Activated naive CD4-positive, alpha-beta T cell treated with anti-CD3 and anti-CD28 coated beads for 36 hours (primary cell): ENCODE measurements at regions of chr20 and their contacts with region 1.

Region 1: DNA sequence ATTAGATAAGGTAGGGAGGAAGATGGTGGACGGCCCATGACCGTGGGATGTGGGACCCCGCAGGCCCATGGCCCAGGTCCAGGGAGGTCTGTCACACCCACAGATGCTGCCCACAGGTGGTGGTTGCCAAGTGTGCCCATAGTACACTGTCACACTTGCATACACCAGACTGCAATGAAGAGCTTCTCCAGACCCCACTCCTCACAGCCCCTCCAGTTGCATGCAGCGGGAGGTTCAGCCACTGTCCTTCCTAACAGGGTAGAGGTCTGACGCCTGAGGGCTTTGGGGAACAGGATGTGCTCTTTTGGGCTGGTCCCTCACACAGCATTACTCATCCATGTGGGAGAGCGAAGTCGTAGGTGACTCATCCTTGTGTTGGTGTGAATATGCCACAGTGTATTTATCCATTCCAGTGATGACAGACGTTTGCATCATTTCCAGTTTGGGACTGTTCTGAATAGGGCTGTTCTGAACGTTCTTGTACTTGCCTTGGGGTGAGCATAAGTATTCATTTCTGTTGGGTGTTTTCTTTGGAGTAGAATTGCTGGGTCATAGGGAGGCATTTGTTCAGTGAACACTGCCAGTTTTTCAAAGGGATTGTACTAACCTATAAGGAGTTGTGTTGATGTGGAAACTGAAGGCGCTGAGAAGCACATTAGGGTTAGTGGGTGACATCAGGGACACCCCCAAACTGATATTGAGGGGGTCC is 10.1 kb upstream of the PYGB start:
- DNase-seq: peak; percentile 88
- H3K4me3 Mint-ChIP-seq: peak overlapping the region; percentile 42
- H3K27ac Mint-ChIP-seq: peak overlapping the region; percentile 92
- H3K4me1 Mint-ChIP-seq: peaks cover 25% of the 10 kb centered on the region
- H3K27me3 Mint-ChIP-seq: peaks cover 14% of the 10 kb centered on the region

Region 2: DNA sequence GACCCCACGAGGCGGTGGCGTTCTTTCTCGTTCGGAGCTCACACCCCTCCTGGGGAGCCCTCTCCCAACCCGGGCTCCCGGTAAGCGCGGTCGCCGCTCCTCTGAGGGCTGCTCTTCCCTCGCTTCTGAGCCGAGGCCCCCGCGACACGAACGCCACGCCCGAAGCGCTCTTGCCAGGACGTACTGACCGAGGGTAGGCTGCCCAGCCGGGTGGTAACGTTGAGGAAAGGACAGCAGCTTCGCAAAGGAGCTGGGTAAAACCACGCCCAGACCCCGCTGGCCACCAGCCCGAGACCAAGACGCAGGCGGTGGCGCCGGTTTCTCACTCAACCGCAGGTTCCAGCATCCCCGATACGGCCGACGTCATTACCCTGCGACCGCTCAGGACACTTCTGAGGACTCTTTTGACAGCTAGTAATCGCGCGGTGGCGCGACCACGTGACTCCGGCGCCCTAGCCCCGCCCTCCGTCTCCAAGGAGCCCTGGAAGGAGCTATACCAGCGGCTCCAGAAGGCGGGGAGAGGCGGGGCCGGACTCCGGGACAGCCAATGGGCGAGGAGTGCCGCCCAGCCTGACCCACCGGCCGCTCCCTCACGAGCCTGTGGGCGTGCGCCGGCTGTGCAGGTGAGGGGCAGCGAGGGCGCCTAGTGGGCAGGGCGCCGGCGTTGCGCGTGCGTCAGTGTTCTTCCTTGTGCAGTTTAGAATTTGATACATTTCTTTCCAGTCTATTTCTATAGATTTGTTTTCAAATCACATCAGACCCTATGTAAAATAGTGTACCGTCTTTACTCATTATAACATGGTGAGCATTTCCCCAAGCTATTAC is 1879.8 kb before region 1 on chr20:
- CTCF ChIA-PET with region 1: no interaction called
- intact Hi-C with region 1: loop called (anchors 10 kb)
- DNase-seq: peak; percentile 100
- H3K4me3 Mint-ChIP-seq: peak overlapping the region; percentile 87
- H3K27ac Mint-ChIP-seq: peak overlapping the region; percentile 90
- H3K4me1 Mint-ChIP-seq: peaks cover 29% of the 10 kb centered on the region
- H3K27me3 Mint-ChIP-seq: no peaks in the 10 kb centered on the region

Region 3: GRCh38 chr20:25090492-25091429 is 147.0 kb before region 1 on chr20:
- CTCF ChIA-PET with region 1: no interaction called
- intact Hi-C with region 1: loop called (anchors 2 kb)
- DNase-seq: peak; percentile 88
- H3K4me3 Mint-ChIP-seq: peak overlapping the region; percentile 41
- H3K27ac Mint-ChIP-seq: peak overlapping the region; percentile 44
- H3K4me1 Mint-ChIP-seq: peaks cover 28% of the 10 kb centered on the region
- H3K27me3 Mint-ChIP-seq: peaks cover 7% of the 10 kb centered on the region

Region 4: GRCh38 chr20:25247956-25248785 is 10.4 kb after region 1 on chr20 and contains the start of gene PYGB:
- CTCF ChIA-PET with region 1: no interaction called
- intact Hi-C with region 1: loop called (anchors 1 kb)
- DNase-seq: peak; percentile 68
- H3K4me3 Mint-ChIP-seq: peak within 1 kb of the TSS; percentile 91
- H3K27ac Mint-ChIP-seq: peak within 1 kb of the TSS; percentile 82
- H3K4me1 Mint-ChIP-seq: peaks cover 57% of the 10 kb centered on the region
- H3K27me3 Mint-ChIP-seq: peaks cover 7% of the 10 kb centered on the region
- total RNA-seq, gene PYGB: 19.6 to 20.0 TPM

Region 5: GRCh38 chr20:25310268-25310920 is 72.6 kb after region 1 on chr20:
- CTCF ChIA-PET with region 1: no interaction called
- intact Hi-C with region 1: loop called (anchors 2 kb)
- DNase-seq: peak; percentile 81
- H3K4me3 Mint-ChIP-seq: peak overlapping the region; percentile 56
- H3K27ac Mint-ChIP-seq: peak overlapping the region; percentile 76
- H3K4me1 Mint-ChIP-seq: peaks cover 31% of the 10 kb centered on the region
- H3K27me3 Mint-ChIP-seq: no peaks in the 10 kb centered on the region

Region 6: DNA sequence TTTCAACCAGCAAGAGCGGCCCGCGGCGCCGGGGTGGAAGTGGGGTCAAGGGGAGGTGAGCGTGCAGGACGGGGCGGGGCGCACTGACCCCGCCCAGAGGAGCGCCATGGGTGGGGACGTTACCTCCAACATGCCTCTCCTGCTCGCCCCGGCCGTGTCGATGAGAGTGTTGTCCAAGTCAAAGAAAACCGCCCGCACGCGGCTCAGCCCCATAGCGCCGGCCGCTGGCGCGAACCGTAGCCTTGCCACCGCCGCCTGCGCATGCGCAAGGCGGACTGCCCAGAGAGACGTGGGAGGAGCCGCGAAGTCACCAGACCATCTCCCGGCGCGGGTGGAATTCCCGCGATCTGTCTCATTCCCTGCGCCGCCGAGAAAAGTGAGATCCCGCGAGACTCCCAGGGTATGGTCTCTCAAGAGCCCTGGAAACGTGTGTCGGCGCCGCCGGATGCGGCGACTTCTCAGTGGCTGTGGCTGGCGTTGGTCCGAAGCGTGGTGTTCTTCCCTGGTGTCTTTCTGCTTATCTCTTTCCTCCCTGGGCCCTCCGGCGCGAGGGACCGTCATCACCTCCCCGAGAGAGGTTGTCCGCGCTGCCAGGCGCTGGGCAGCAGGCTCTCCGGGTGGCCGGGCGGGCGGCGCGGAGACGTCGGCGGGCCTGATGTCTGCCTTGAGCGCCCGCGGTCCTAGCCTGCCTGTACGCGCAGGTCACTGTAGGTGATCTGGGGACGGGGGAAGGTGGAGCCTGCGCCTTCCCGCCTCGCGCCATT is 386.2 kb after region 1 on chr20 and contains the start of gene NANP:
- CTCF ChIA-PET with region 1: no interaction called
- intact Hi-C with region 1: loop called (anchors 2 kb)
- DNase-seq: peak; percentile 96
- H3K4me3 Mint-ChIP-seq: peak within 1 kb of the TSS; percentile 91
- H3K27ac Mint-ChIP-seq: peak within 1 kb of the TSS; percentile 95
- H3K4me1 Mint-ChIP-seq: peaks cover 18% of the 10 kb centered on the region
- H3K27me3 Mint-ChIP-seq: no peaks in the 10 kb centered on the region
- total RNA-seq, gene NANP: 6.4 to 6.9 TPM